Caco-2 (cell line): ENCODE measurements at regions of chr12 and their contacts with region 1.

Region 1: DNA sequence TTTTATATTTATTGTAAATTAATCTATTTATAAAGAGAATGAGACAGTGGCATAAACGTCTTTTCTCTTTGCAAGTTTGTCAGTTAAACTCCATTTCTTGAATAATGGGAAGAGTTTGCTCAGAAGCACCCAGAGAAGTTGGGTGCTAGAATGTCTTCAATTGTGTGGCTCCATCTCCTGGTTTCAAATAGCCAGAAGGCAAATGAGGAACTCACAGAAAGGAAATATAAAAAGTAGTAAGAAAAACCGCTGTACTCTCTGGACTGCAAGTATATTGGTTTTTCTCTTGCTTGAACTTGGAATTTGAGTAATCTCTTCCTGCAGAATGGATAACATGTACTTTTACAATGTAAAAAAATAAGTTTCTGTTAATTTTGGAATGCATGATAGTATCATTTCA is 217.5 kb downstream of the DPY19L2 start:
- DNase-seq: no peak
- H3K4me3 ChIP-seq: no peak overlapping the region
- H3K4me3 Mint-ChIP-seq: no peak overlapping the region
- H3K27ac Mint-ChIP-seq: no peak overlapping the region
- H3K4me1 ChIP-seq: no peaks in the 10 kb centered on the region; the same call in 1 of the 2 replicates
- H3K4me1 Mint-ChIP-seq: no peaks in the 10 kb centered on the region
- H3K27me3 ChIP-seq: no peaks in the 10 kb centered on the region
- H3K27me3 Mint-ChIP-seq: no peaks in the 10 kb centered on the region
- CTCF ChIP-seq: no peak

Region 2: GRCh38 chr12:62640910-62641448 is 809.8 kb before region 1 on chr12:
- CTCF ChIA-PET with region 1: no interaction called
- POLR2A ChIA-PET with region 1: no interaction called
- intact Hi-C with region 1: loop called (anchors 5 kb)
- DNase-seq: no peak
- H3K4me3 ChIP-seq: no peak overlapping the region
- H3K4me3 Mint-ChIP-seq: no peak overlapping the region
- H3K27ac Mint-ChIP-seq: peak overlapping the region; percentile 87
- H3K4me1 ChIP-seq: 0 out of 2 replicates have a peak, but pooled peaks cover 10% of the 10 kb centered on the region
- H3K4me1 Mint-ChIP-seq: peaks cover 8% of the 10 kb centered on the region
- H3K27me3 ChIP-seq: no peaks in the 10 kb centered on the region
- H3K27me3 Mint-ChIP-seq: no peaks in the 10 kb centered on the region
- CTCF ChIP-seq: no peak

Region 3: GRCh38 chr12:63326260-63326659 is 124.6 kb before region 1 on chr12:
- CTCF ChIA-PET with region 1: no interaction called
- POLR2A ChIA-PET with region 1: no interaction called
- intact Hi-C with region 1: no loop called
- DNase-seq: no peak
- H3K4me3 ChIP-seq: no peak overlapping the region
- H3K4me3 Mint-ChIP-seq: no peak overlapping the region
- H3K27ac Mint-ChIP-seq: no peak overlapping the region
- H3K4me1 ChIP-seq: no peaks in the 10 kb centered on the region
- H3K4me1 Mint-ChIP-seq: no peaks in the 10 kb centered on the region
- H3K27me3 ChIP-seq: no peaks in the 10 kb centered on the region
- H3K27me3 Mint-ChIP-seq: no peaks in the 10 kb centered on the region
- CTCF ChIP-seq: no peak

Region 4: GRCh38 chr12:63525831-63526230 is 75.0 kb after region 1 on chr12:
- CTCF ChIA-PET with region 1: no interaction called
- POLR2A ChIA-PET with region 1: no interaction called
- intact Hi-C with region 1: no loop called
- DNase-seq: no peak
- H3K4me3 ChIP-seq: no peak overlapping the region
- H3K4me3 Mint-ChIP-seq: no peak overlapping the region
- H3K27ac Mint-ChIP-seq: no peak overlapping the region
- H3K4me1 ChIP-seq: no peaks in the 10 kb centered on the region
- H3K4me1 Mint-ChIP-seq: no peaks in the 10 kb centered on the region
- H3K27me3 ChIP-seq: no peaks in the 10 kb centered on the region
- H3K27me3 Mint-ChIP-seq: no peaks in the 10 kb centered on the region
- CTCF ChIP-seq: no peak